Naive thymus-derived CD4-positive, alpha-beta T cell (primary cell): ENCODE measurements at regions of chr5 and their contacts with region 1.

Region 1: DNA sequence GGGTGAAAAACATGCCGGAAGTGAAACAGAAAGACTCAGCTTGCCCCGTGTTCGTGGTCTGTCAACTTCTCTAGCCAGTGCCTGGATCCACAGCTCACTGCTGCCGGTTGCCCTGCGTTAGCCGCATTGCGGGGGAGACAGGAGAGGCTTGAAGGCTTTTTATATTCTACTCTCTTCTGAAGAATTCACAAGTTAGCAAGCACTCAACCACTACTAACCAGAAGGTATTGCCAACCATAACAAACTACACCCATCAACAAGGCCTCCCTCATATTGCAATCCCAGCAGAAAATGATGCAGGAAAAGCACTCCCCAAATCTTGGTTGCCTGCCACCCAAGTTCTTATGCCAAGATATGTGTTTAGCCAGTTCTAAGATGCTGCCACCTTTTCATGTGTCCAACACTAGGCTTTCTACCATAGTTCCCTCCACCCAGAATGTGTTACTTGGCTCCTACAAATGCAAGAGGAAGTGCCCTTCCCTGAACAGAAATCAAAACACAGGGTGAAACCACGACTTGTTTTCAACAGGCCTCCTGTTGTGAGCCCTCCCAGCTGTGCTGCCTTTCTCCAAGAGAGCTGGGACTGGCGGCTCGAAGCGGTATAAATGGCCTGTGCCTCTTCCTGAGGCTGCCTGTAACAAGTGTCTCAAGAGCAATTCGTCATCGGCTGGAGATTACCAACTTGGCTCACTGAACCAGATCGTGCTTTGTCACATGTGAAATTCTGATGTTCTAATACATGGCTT is 129.0 kb downstream of the SNX18 start:
- DNase-seq: peak; percentile 18 to 81 (median 70)
- ATAC-seq: peak; percentile 88
- H3K4me3 ChIP-seq: peak overlapping the region; percentile 44
- H3K4me3 Mint-ChIP-seq: peak overlapping the region; percentile 63 to 85 (median 80)
- H3K27ac ChIP-seq: peak overlapping the region; percentile 64
- H3K27ac Mint-ChIP-seq: peak overlapping the region; percentile 94 to 99 (median 97)
- H3K4me1 ChIP-seq: peaks cover 44 to 48% of the 10 kb centered on the region in 2 donors
- H3K4me1 Mint-ChIP-seq: peaks cover 41 to 72% (median 60%) of the 10 kb centered on the region in 7 donors
- H3K27me3 ChIP-seq: no peaks in the 10 kb centered on the region
- H3K27me3 Mint-ChIP-seq: no peaks in the 10 kb centered on the region

Region 2: GRCh38 chr5:54610197-54610944 is 36.2 kb before region 1 on chr5:
- CTCF ChIA-PET with region 1: no interaction called
- POLR2A ChIA-PET with region 1: interaction called, 8 read pairs
- intact Hi-C with region 1: loop called (anchors 1 to 2 kb)
- DNase-seq: peak in 6 of 9 donors; percentile 8 to 36 (median 22)
- ATAC-seq: peak; percentile 89
- H3K4me3 ChIP-seq: peak overlapping the region; percentile 23
- H3K4me3 Mint-ChIP-seq: peak overlapping the region in 9 of 10 donors; percentile 14 to 75 (median 52)
- H3K27ac ChIP-seq: no peak overlapping the region
- H3K27ac Mint-ChIP-seq: peak overlapping the region in 8 of 9 donors; percentile 4 to 88 (median 50)
- H3K4me1 ChIP-seq: peaks cover 14 to 32% of the 10 kb centered on the region in 2 donors
- H3K4me1 Mint-ChIP-seq: peaks cover 19 to 32% (median 23%) of the 10 kb centered on the region in 7 donors
- H3K27me3 ChIP-seq: no peaks in the 10 kb centered on the region
- H3K27me3 Mint-ChIP-seq: peaks cover 0 to 8% (median 0%) of the 10 kb centered on the region in 5 donors

Region 3: DNA sequence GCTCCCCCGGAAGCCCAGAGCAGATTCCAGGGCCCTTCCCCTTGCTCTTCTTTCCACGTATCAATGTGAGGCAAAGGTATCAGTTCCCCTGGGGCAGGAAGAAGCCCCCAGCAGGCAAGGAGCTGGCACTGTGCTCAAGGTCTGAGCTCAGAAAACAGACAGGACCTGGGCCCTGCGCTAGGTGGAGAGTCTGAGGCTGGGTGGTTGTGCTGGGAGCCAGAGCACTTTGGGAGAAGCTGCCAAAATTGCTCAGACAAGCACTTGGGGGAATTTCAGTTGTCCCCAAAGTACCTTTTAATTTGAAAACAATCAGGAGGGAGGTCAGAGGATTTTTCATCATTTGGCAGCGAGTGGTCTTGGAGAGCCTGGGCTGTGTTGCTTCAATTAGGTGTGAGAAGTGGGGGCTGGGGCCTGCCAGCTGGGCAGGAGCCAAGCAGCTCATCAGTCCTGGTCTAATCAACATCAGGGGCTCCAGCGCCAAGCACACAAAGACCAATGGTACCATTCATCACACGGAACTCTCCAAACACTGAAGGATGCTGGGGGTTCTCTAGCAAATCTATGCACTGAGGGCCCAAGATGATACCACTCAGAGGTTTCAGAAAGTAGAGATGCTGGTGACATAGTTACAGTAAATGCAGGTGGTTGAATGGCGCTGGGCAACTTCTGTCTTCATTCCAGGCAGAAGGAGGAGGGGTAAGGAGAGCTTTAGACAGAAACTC is 47.6 kb after region 1 on chr5:
- CTCF ChIA-PET with region 1: no interaction called
- POLR2A ChIA-PET with region 1: no interaction called
- intact Hi-C with region 1: loop called in 1 of 2 experiments (anchors 5 kb)
- DNase-seq: no peak
- ATAC-seq: no peak
- H3K4me3 ChIP-seq: no peak overlapping the region
- H3K4me3 Mint-ChIP-seq: no peak overlapping the region
- H3K27ac ChIP-seq: no peak overlapping the region
- H3K27ac Mint-ChIP-seq: peak overlapping the region in 1 of 9 donors; percentile 26
- H3K4me1 ChIP-seq: no peaks in the 10 kb centered on the region
- H3K4me1 Mint-ChIP-seq: peaks cover 0 to 10% (median 0%) of the 10 kb centered on the region in 7 donors
- H3K27me3 ChIP-seq: no peaks in the 10 kb centered on the region
- H3K27me3 Mint-ChIP-seq: peaks cover 0 to 18% (median 0%) of the 10 kb centered on the region in 5 donors

Region 4: GRCh38 chr5:54743997-54744788 is 97.7 kb after region 1 on chr5:
- CTCF ChIA-PET with region 1: no interaction called
- POLR2A ChIA-PET with region 1: interaction called, 9 read pairs
- intact Hi-C with region 1: loop called (anchors 1 kb)
- DNase-seq: peak in 8 of 9 donors; percentile 38 to 71 (median 52)
- ATAC-seq: peak; percentile 90
- H3K4me3 ChIP-seq: peak overlapping the region; percentile 9
- H3K4me3 Mint-ChIP-seq: peak overlapping the region in 9 of 10 donors; percentile 3 to 77 (median 35)
- H3K27ac ChIP-seq: no peak overlapping the region
- H3K27ac Mint-ChIP-seq: peak overlapping the region in 8 of 9 donors; percentile 25 to 82 (median 36)
- H3K4me1 ChIP-seq: peaks cover 11 to 35% of the 10 kb centered on the region in 2 donors
- H3K4me1 Mint-ChIP-seq: peaks cover 16 to 57% (median 20%) of the 10 kb centered on the region in 7 donors
- H3K27me3 ChIP-seq: no peaks in the 10 kb centered on the region
- H3K27me3 Mint-ChIP-seq: peaks cover 0 to 6% (median 4%) of the 10 kb centered on the region in 5 donors

Region 5: DNA sequence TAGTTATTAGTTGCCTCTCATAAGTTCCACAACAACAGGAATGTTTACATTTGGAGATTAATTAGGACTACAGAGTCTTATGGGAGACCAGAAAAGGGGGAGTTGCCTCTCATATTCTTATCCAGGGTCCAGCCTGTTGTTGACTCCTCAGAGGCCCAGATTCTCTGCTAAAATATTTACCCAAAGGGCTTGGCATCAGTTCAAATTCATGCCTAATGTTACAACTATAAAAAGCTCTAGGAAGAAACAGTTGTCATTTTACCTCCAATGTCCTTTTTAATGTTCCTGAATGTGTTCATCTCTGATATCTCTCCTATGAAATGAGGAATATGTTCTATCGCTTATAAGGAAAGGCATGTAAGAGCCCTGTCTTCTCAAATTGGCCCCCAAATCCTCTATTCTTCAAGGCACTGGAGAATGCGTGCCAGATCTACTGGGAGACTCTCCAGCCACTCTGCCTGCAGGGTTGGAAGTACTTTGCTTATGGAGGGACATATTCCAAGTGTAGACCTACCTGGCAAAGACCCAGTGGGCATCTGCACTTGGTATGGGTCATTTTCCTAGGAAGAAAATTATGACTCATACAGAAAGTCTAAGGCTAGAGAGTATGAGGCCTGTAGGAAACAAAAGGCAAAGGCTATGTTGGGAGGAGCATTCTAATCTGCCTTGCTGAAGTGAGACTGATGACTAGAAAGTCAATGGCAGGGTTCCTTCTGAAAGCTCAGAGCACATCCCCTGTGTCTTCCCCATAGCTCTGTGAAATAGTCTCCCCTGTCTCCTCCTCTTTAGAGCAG is 146.3 kb after region 1 on chr5:
- CTCF ChIA-PET with region 1: no interaction called
- POLR2A ChIA-PET with region 1: interaction called, 3 read pairs
- intact Hi-C with region 1: loop called in 1 of 2 experiments (anchors 1 kb)
- DNase-seq: no peak
- ATAC-seq: no peak
- H3K4me3 ChIP-seq: no peak overlapping the region
- H3K4me3 Mint-ChIP-seq: peak overlapping the region in 1 of 10 donors; percentile 11
- H3K27ac ChIP-seq: no peak overlapping the region
- H3K27ac Mint-ChIP-seq: peak overlapping the region in 1 of 9 donors; percentile 65
- H3K4me1 ChIP-seq: no peaks in the 10 kb centered on the region
- H3K4me1 Mint-ChIP-seq: peaks cover 4 to 40% (median 16%) of the 10 kb centered on the region in 7 donors
- H3K27me3 ChIP-seq: no peaks in the 10 kb centered on the region
- H3K27me3 Mint-ChIP-seq: peaks cover 0 to 19% (median 4%) of the 10 kb centered on the region in 5 donors

Region 6: GRCh38 chr5:55062039-55062779 is 415.7 kb after region 1 on chr5:
- CTCF ChIA-PET with region 1: no interaction called
- POLR2A ChIA-PET with region 1: no interaction called
- intact Hi-C with region 1: loop called in 1 of 2 experiments (anchors 1 kb)
- DNase-seq: peak in 7 of 9 donors; percentile 25 to 71 (median 46)
- ATAC-seq: peak; percentile 81
- H3K4me3 ChIP-seq: peak overlapping the region; percentile 33
- H3K4me3 Mint-ChIP-seq: peak overlapping the region; percentile 43 to 94 (median 82)
- H3K27ac ChIP-seq: no peak overlapping the region
- H3K27ac Mint-ChIP-seq: peak overlapping the region; percentile 17 to 98 (median 62)
- H3K4me1 ChIP-seq: peaks cover 26 to 30% of the 10 kb centered on the region in 2 donors
- H3K4me1 Mint-ChIP-seq: peaks cover 28 to 80% (median 67%) of the 10 kb centered on the region in 7 donors
- H3K27me3 ChIP-seq: no peaks in the 10 kb centered on the region
- H3K27me3 Mint-ChIP-seq: peaks cover 0 to 7% (median 0%) of the 10 kb centered on the region in 5 donors

Region 7: DNA sequence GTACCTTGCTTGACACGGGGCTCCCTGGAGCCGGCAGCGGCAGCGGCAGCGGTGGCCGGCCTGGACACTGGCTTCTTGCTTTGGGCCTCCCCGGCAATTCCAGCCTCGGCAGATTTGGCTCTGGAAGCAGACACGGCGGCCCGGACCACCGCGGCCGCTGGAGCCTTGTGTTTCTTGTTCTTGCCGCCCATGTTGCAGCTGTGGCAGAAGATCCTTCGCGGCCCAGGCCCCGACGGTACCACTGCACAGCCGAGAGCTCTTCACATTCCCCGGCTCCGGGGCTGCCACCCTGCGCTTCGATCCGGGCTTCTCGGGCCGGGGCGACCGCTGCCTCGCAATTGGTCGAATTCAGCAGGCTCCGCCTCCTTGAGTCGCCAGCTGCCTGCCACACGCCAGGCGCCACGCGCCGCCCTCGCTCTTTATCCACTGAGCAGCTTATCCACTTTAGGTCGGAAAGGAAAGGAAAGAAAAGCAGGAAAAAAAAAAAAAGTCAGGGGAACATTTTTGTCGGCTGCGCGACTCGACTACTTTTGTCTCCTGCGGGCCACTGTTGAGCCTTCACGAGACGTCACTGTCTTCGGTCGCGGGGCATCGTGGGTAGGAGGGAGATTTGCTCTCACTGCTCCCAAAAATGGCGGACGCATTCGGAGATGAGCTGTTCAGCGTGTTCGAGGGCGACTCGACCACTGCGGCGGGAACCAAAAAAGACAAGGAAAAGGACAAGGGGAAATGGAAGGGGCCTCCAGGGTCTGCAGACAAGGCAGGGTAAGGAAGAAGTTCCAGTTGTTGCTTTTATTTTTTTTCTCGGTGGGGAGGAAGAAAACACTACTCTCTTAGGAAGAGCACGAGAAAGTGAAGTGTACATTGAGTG is 661.1 kb after region 1 on chr5 and contains the starts of genes DHX29 and MTREX:
- CTCF ChIA-PET with region 1: no interaction called
- POLR2A ChIA-PET with region 1: no interaction called
- intact Hi-C with region 1: loop called in 1 of 2 experiments (anchors 1 kb)
- DNase-seq: peak; percentile 85 to 93 (median 91)
- ATAC-seq: peak; percentile 94
- H3K4me3 ChIP-seq: peak within 1 kb of the TSS; percentile 97
- H3K4me3 Mint-ChIP-seq: no peak within 1 kb of the TSS
- H3K27ac ChIP-seq: peak within 1 kb of the TSS; percentile 89
- H3K27ac Mint-ChIP-seq: no peak within 1 kb of the TSS
- H3K4me1 ChIP-seq: peaks cover 28 to 33% of the 10 kb centered on the region in 2 donors
- H3K4me1 Mint-ChIP-seq: peaks cover 15 to 34% (median 21%) of the 10 kb centered on the region in 7 donors
- H3K27me3 ChIP-seq: no peaks in the 10 kb centered on the region
- H3K27me3 Mint-ChIP-seq: no peaks in the 10 kb centered on the region
- total RNA-seq, gene DHX29: 12.5 to 19.2 (median 15.9) TPM
- total RNA-seq, gene MTREX: 64.0 to 83.7 (median 66.3) TPM